T-cell (primary cell): ENCODE measurements at regions of chr11 and their contacts with region 1.

Region 1: DNA sequence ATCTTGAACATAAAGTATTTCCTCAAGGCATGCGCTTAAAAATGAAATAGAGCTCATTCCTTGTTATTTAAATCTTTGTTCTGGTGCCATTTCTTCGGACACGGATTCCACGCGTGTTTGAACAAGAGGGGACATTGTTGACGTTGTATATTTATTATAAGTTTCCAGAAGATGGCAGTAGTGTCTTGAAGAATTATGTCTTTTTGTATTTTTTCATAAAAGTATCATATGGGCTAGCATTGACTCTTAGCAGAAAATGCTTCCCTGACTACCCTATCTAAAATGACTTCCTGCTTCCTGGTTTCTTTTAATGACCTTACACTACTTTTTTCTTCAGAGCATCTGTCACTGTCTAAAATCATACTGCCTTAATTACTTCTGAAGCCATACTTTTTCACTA is 20.4 kb downstream of the BIRC2 start:
- DNase-seq: peak in 1 of 35 experiments; percentile 53
- ATAC-seq: peak; percentile 57 to 80 (median 73)
- H3K4me3 ChIP-seq: no peak overlapping the region
- H3K4me3 Mint-ChIP-seq: peak overlapping the region in 1 of 3 donors; percentile 9
- H3K27ac ChIP-seq: no peak overlapping the region
- H3K27ac Mint-ChIP-seq: peak overlapping the region; percentile 76 to 81
- H3K4me1 ChIP-seq: peaks cover 0 to 3% of the 10 kb centered on the region in 2 experiments
- H3K4me1 Mint-ChIP-seq: peaks cover 33 to 50% (median 47%) of the 10 kb centered on the region in 3 donors
- H3K27me3 ChIP-seq: no peaks in the 10 kb centered on the region
- H3K27me3 Mint-ChIP-seq: no peaks in the 10 kb centered on the region

Region 2: GRCh38 chr11:102346748-102347461 is 20.5 kb before region 1 on chr11 and contains the start of gene BIRC2:
- CTCF ChIA-PET with region 1: interaction called, 25 to 29 read pairs
- POLR2A ChIA-PET with region 1: interaction called in 1 of 2 experiments, 6 read pairs
- DNase-seq: peak; percentile 88 to 98 (median 94)
- ATAC-seq: peak; percentile 85 to 92 (median 90)
- H3K4me3 ChIP-seq: peak within 1 kb of the TSS; percentile 98 to 99
- H3K4me3 Mint-ChIP-seq: peak within 1 kb of the TSS; percentile 92 to 98 (median 98)
- H3K27ac ChIP-seq: peak within 1 kb of the TSS; percentile 99
- H3K27ac Mint-ChIP-seq: peak within 1 kb of the TSS; percentile 99
- H3K4me1 ChIP-seq: peaks cover 6 to 17% of the 10 kb centered on the region in 2 experiments
- H3K4me1 Mint-ChIP-seq: peaks cover 40 to 50% (median 50%) of the 10 kb centered on the region in 3 donors
- H3K27me3 ChIP-seq: no peaks in the 10 kb centered on the region
- H3K27me3 Mint-ChIP-seq: no peaks in the 10 kb centered on the region
- total RNA-seq, gene BIRC2: 53.3 to 100 (median 60.8) TPM

Region 3: GRCh38 chr11:102390667-102391465 is 23.5 kb after region 1 on chr11:
- CTCF ChIA-PET with region 1: interaction called, 4 to 19 read pairs
- POLR2A ChIA-PET with region 1: interaction called in 1 of 2 experiments, 8 read pairs
- DNase-seq: peak in 30 of 35 experiments; percentile 17 to 74 (median 32)
- ATAC-seq: peak; percentile 62 to 72 (median 65)
- H3K4me3 ChIP-seq: no peak overlapping the region
- H3K4me3 Mint-ChIP-seq: no peak overlapping the region
- H3K27ac ChIP-seq: no peak overlapping the region
- H3K27ac Mint-ChIP-seq: peak overlapping the region; percentile 73 to 81
- H3K4me1 ChIP-seq: peaks cover 7 to 20% of the 10 kb centered on the region in 2 experiments
- H3K4me1 Mint-ChIP-seq: peaks cover 36 to 50% (median 46%) of the 10 kb centered on the region in 3 donors
- H3K27me3 ChIP-seq: no peaks in the 10 kb centered on the region
- H3K27me3 Mint-ChIP-seq: no peaks in the 10 kb centered on the region

Region 4: DNA sequence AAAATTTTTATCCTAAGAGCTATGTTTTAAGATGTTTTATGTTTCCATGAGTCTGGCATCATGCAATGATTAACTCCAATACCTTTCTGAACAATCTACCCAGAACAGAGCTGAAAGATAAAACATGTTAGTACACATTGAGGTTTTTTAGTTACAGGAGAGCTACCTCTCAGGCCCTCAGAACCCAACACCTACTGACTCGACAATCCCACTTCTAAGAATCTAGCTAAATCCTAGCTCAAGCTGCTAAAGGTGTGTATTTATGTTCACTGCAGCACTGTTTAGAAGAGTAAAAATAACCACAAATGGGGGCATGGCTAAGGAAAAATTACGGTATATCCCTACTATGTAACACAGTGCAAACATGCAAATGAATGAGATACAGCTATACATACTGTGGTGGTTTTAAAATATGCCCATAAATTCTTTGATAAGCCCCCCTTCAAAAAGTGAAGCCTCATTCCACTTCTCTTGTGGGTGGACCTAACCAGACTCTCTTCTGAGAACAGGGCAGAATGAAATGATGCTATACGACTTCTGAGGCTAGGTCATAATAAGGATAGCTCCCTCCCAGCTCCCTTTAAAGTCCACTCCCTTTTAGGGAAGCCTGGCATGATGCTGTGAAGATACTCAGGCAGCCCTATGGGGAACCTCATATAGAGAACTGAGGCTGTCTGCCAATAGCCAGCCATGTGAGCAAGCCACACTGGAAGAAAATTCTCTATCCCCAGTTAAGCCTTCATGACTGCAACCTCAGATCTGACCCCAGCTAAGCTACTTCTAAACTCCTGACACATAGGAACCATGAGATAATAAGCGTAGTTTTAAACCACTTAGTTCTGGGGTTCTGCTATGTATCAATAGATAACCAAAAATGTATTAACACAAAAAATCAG is 55.7 kb after region 1 on chr11:
- CTCF ChIA-PET with region 1: interaction called, 3 to 4 read pairs
- POLR2A ChIA-PET with region 1: interaction called in 1 of 2 experiments, 12 read pairs
- DNase-seq: peak in 1 of 35 experiments; percentile 35
- ATAC-seq: peak; percentile 15 to 66 (median 60)
- H3K4me3 ChIP-seq: no peak overlapping the region
- H3K4me3 Mint-ChIP-seq: peak overlapping the region in 1 of 3 donors; percentile 67
- H3K27ac ChIP-seq: peak overlapping the region; percentile 48
- H3K27ac Mint-ChIP-seq: peak overlapping the region; percentile 86 to 89
- H3K4me1 ChIP-seq: peaks cover 40 to 62% of the 10 kb centered on the region in 2 experiments
- H3K4me1 Mint-ChIP-seq: peaks cover 92 to 95% (median 93%) of the 10 kb centered on the region in 3 donors
- H3K27me3 ChIP-seq: no peaks in the 10 kb centered on the region
- H3K27me3 Mint-ChIP-seq: no peaks in the 10 kb centered on the region

Region 5: DNA sequence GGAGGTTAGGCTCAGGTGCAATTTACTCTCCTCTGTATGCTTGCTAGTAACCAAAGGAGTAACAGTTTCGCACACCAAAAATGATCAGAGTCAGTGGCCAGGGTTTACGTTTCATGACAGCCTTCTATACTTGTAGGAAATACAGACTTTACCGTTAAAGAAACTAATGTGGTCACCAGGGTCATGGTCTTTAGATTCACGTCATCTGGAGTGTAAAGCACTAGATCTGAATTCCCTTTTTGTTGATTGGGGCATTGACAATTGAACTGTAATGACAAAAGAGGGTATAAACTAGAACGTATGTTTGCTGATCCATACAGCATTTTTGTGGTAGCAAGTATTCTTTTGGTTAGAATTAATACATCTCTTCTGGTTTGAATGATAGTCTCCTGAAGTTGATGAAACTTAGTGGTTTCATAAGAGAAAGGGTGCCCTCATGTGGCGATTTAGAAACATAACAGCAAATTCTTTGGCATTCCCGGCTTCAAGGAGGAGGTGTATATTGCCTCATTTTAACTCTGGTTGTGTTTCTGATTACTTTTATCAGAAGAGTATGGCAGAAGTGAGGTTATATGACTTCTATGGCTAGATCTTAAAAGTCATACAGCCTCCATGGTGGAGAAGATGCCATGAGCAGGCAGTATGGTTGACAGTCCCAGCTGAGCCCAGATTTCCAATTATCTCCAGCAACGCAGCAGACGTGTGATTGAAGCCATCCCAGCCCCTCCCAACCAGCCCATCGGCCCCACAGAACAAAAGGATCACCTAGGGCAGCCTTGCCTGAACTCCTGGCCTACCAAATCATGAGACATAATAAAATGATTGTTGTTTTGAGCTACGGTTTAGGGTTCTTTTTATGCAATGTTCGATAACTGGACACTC is 128.0 kb after region 1 on chr11:
- CTCF ChIA-PET with region 1: interaction called, 16 to 22 read pairs
- POLR2A ChIA-PET with region 1: interaction called in 1 of 2 experiments, 3 read pairs
- DNase-seq: peak in 30 of 35 experiments; percentile 4 to 91 (median 30)
- ATAC-seq: peak; percentile 69 to 86 (median 78)
- H3K4me3 ChIP-seq: no peak overlapping the region
- H3K4me3 Mint-ChIP-seq: no peak overlapping the region
- H3K27ac ChIP-seq: no peak overlapping the region
- H3K27ac Mint-ChIP-seq: no peak overlapping the region
- H3K4me1 ChIP-seq: no peaks in the 10 kb centered on the region
- H3K4me1 Mint-ChIP-seq: peaks cover 7 to 11% (median 8%) of the 10 kb centered on the region in 3 donors
- H3K27me3 ChIP-seq: peaks cover 0 to 9% of the 10 kb centered on the region in 2 experiments
- H3K27me3 Mint-ChIP-seq: peaks cover 5 to 6% of the 10 kb centered on the region in 2 donors

Region 6: GRCh38 chr11:102614485-102614884 is 247.1 kb after region 1 on chr11:
- CTCF ChIA-PET with region 1: interaction called, 5 to 19 read pairs
- POLR2A ChIA-PET with region 1: no interaction called
- DNase-seq: no peak
- ATAC-seq: no peak
- H3K4me3 ChIP-seq: no peak overlapping the region
- H3K4me3 Mint-ChIP-seq: no peak overlapping the region
- H3K27ac ChIP-seq: no peak overlapping the region
- H3K27ac Mint-ChIP-seq: no peak overlapping the region
- H3K4me1 ChIP-seq: peaks cover 0 to 2% of the 10 kb centered on the region in 2 experiments
- H3K4me1 Mint-ChIP-seq: peaks cover 0 to 6% (median 3%) of the 10 kb centered on the region in 3 donors
- H3K27me3 ChIP-seq: peaks cover 0 to 3% of the 10 kb centered on the region in 2 experiments
- H3K27me3 Mint-ChIP-seq: peaks cover 0 to 4% of the 10 kb centered on the region in 2 donors

Region 7: GRCh38 chr11:102666331-102666957 is 299.1 kb after region 1 on chr11:
- CTCF ChIA-PET with region 1: interaction called, 4 to 16 read pairs
- POLR2A ChIA-PET with region 1: no interaction called
- DNase-seq: peak in 6 of 35 experiments; percentile 1 to 53 (median 10)
- ATAC-seq: peak in 2 of 4 experiments; percentile 42 to 46
- H3K4me3 ChIP-seq: no peak overlapping the region
- H3K4me3 Mint-ChIP-seq: no peak overlapping the region
- H3K27ac ChIP-seq: no peak overlapping the region
- H3K27ac Mint-ChIP-seq: no peak overlapping the region
- H3K4me1 ChIP-seq: peaks cover 0 to 4% of the 10 kb centered on the region in 2 experiments
- H3K4me1 Mint-ChIP-seq: peaks cover 0 to 5% (median 1%) of the 10 kb centered on the region in 3 donors
- H3K27me3 ChIP-seq: no peaks in the 10 kb centered on the region
- H3K27me3 Mint-ChIP-seq: peaks cover 5 to 7% of the 10 kb centered on the region in 2 donors